ENCODE measurements at regions of chr1 and their contacts with region 1.

Region 1: GRCh38 chr1:10430216-10431069 is at the start of gene CENPS:
- DNase-seq: peak; percentile 29 to 95 (median 84)

Region 2: GRCh38 chr1:9874959-9875635 is 555.3 kb before region 1 on chr1:
- intact Hi-C with region 1: loop called (anchors 10 kb)
- DNase-seq: peak; percentile 64 to 93 (median 81)

Region 3: GRCh38 chr1:10378081-10378841 is 52.2 kb before region 1 on chr1:
- intact Hi-C with region 1: loop called (anchors 2 kb)
- DNase-seq: peak; percentile 16 to 80 (median 52)